CD4-positive, alpha-beta memory T cell (primary cell): ENCODE measurements at regions of chr5 and their contacts with region 1.

Region 1: DNA sequence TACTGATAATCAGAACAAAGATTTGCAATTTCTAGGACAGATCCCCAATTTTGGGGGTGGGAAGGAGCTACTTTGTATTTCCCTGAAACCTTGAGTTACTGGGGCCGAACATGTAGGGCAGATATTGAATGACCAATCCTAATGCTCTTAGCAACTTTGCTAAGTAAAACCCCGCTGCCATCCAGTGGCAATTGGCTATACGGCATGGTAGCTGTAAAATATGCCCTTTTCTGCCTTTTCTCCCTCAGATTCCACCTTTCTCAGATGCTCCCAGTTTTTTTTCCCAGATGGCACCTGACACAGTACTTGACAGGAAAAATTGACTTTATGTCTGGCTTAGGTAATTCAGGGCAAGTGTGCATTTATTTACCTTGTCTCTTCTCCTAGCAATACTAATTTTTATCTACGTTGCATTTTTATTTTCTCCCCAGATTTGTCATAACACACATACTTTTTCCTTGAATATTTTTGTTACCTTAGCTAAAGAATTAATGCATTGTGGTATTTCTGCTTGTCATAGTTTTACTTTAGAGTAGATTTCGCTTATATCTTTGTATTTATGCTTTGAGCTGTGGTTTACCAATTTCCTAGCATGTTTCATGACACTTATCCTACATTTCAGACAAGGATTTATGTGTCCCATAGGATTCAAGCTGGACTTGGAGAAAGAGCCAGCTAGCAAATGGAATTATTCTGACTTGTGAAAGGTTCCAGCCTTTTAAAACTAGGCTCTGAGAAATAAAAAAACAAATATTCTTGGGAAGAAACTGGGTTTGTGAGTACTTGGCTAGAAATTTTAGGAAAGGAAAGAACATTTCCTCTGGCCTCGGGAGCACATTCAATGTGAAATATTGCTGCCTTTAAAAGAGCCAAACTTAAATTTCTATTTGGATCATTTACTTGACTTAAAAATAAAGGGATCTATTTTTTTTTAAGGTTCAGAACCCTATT is 37.4 kb downstream of the PIK3R1 start:
- DNase-seq: peak in 3 of 5 donors; percentile 36 to 41 (median 38)
- H3K4me3 ChIP-seq: no peak overlapping the region
- H3K4me3 Mint-ChIP-seq: peak overlapping the region in 2 of 8 donors; percentile 52 to 66
- H3K27ac ChIP-seq: no peak overlapping the region
- H3K27ac Mint-ChIP-seq: peak overlapping the region in 5 of 7 donors; percentile 1 to 93 (median 62)
- H3K4me1 ChIP-seq: peaks cover 95% of the 10 kb centered on the region
- H3K4me1 Mint-ChIP-seq: peaks cover 79 to 97% (median 90%) of the 10 kb centered on the region in 4 donors
- H3K27me3 ChIP-seq: no peaks in the 10 kb centered on the region
- H3K27me3 Mint-ChIP-seq: no peaks in the 10 kb centered on the region

Region 2: GRCh38 chr5:66306105-66306843 is 1946.7 kb before region 1 on chr5:
- CTCF ChIA-PET with region 1: no interaction called
- POLR2A ChIA-PET with region 1: no interaction called
- intact Hi-C with region 1: loop called (anchors 10 kb)
- DNase-seq: peak in 4 of 5 donors; percentile 17 to 24 (median 19)
- H3K4me3 ChIP-seq: no peak overlapping the region
- H3K4me3 Mint-ChIP-seq: no peak overlapping the region
- H3K27ac ChIP-seq: no peak overlapping the region
- H3K27ac Mint-ChIP-seq: peak overlapping the region in 2 of 7 donors; percentile 16 to 35
- H3K4me1 ChIP-seq: no peaks in the 10 kb centered on the region
- H3K4me1 Mint-ChIP-seq: peaks cover 3 to 9% (median 4%) of the 10 kb centered on the region in 4 donors
- H3K27me3 ChIP-seq: no peaks in the 10 kb centered on the region
- H3K27me3 Mint-ChIP-seq: peaks cover 10 to 15% of the 10 kb centered on the region in 2 donors

Region 3: DNA sequence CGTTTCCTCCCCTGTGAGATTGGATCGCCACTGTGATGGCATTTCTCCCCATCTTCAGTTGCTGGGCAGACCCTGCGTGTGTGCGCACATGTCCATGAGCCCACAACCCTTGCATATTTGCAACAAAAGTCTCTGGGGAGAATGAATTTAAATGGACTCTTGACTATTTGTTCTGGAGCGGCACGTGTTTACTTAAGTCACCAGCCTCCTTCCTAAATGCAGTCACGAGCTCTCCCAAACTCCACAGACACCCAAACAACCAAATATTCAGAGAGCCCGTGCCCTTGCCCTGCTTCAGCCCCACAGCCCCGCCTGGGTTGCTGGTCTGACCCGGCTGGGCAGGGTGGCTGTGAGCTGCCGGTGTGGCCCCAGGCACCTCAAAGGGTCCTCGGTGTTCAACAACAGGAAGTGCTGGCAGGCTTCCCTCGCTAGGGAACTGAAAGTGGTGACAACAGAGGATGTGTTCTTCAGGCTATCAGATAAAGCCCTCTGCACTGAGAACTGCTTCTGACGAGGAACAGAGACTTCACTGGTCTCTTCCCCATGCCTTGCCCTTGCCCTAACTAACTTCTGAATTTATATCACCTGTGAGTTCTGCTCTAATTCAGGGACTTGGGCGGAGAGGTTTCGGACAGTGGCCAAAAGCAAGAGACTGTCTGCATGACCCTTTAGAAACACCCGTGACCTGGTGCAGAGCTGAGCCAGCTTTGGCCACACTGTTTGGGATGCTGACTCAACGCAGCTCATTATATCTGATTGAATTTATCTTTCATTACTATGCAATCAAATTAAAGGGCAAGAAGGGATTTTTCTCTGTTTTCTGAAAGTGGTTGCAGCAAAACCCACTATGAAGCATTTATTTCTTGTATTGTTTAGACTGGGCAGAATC is 1037.1 kb before region 1 on chr5:
- CTCF ChIA-PET with region 1: interaction called, 10 read pairs
- POLR2A ChIA-PET with region 1: no interaction called
- intact Hi-C with region 1: no loop called
- DNase-seq: peak; percentile 72 to 82 (median 80)
- H3K4me3 ChIP-seq: peak overlapping the region; percentile 10 to 44
- H3K4me3 Mint-ChIP-seq: peak overlapping the region; percentile 52 to 91 (median 82)
- H3K27ac ChIP-seq: peak overlapping the region; percentile 52
- H3K27ac Mint-ChIP-seq: peak overlapping the region; percentile 94 to 99 (median 98)
- H3K4me1 ChIP-seq: peaks cover 65% of the 10 kb centered on the region
- H3K4me1 Mint-ChIP-seq: peaks cover 57 to 69% (median 60%) of the 10 kb centered on the region in 4 donors
- H3K27me3 ChIP-seq: no peaks in the 10 kb centered on the region
- H3K27me3 Mint-ChIP-seq: no peaks in the 10 kb centered on the region

Region 4: DNA sequence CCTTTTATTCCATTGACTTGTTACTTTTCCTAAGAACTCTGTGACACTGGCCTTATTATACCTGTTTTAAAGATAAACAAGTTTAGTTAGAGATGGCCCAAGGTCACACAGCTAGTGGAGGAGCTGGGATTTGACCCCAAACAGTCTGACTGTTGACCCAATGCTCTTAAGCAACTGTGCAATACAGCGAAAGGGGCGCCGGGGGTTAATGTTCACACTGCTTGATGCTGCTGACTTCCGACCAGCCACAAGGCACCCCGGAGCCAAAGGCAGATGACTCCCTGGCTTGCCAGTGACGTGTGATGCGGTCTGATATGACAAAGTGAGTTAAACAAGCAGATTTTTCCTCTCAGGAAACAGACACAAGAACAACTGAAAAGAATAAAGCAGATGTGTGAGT is 13.5 kb before region 1 on chr5:
- CTCF ChIA-PET with region 1: interaction called, 7 read pairs
- POLR2A ChIA-PET with region 1: interaction called, 10 read pairs
- intact Hi-C with region 1: loop called (anchors 1 kb)
- DNase-seq: peak; percentile 76 to 93 (median 79)
- H3K4me3 ChIP-seq: no peak overlapping the region
- H3K4me3 Mint-ChIP-seq: peak overlapping the region in 7 of 8 donors; percentile 34 to 76 (median 60)
- H3K27ac ChIP-seq: peak overlapping the region; percentile 20
- H3K27ac Mint-ChIP-seq: peak overlapping the region; percentile 73 to 97 (median 89)
- H3K4me1 ChIP-seq: peaks cover 77% of the 10 kb centered on the region
- H3K4me1 Mint-ChIP-seq: peaks cover 67 to 90% (median 78%) of the 10 kb centered on the region in 4 donors
- H3K27me3 ChIP-seq: no peaks in the 10 kb centered on the region
- H3K27me3 Mint-ChIP-seq: no peaks in the 10 kb centered on the region

Region 5: GRCh38 chr5:68279984-68280383 is 27.0 kb after region 1 on chr5:
- CTCF ChIA-PET with region 1: interaction called, 12 read pairs
- POLR2A ChIA-PET with region 1: interaction called, 179 read pairs
- intact Hi-C with region 1: no loop called
- DNase-seq: peak; percentile 78 to 88 (median 84)
- H3K4me3 ChIP-seq: peak overlapping the region; percentile 76 to 77
- H3K4me3 Mint-ChIP-seq: peak overlapping the region; percentile 89 to 97 (median 94)
- H3K27ac ChIP-seq: peak overlapping the region; percentile 66
- H3K27ac Mint-ChIP-seq: peak overlapping the region; percentile 89 to 99 (median 96)
- H3K4me1 ChIP-seq: peaks cover 81% of the 10 kb centered on the region
- H3K4me1 Mint-ChIP-seq: peaks cover 66 to 91% (median 75%) of the 10 kb centered on the region in 4 donors
- H3K27me3 ChIP-seq: no peaks in the 10 kb centered on the region
- H3K27me3 Mint-ChIP-seq: no peaks in the 10 kb centered on the region